Colonic mucosa (tissue), 4 donors: ENCODE measurements at regions of chr6 and their contacts with region 1.

Region 1: GRCh38 chr6:36414481-36414880 is 27.0 kb upstream of the ETV7 start:
- DNase-seq: no peak
- H3K4me3 ChIP-seq: no peak overlapping the region
- H3K27ac ChIP-seq: no peak overlapping the region
- H3K4me1 ChIP-seq: no peaks in the 10 kb centered on the region
- H3K27me3 ChIP-seq: no peaks in the 10 kb centered on the region
- CTCF ChIP-seq: no peak

Region 2: DNA sequence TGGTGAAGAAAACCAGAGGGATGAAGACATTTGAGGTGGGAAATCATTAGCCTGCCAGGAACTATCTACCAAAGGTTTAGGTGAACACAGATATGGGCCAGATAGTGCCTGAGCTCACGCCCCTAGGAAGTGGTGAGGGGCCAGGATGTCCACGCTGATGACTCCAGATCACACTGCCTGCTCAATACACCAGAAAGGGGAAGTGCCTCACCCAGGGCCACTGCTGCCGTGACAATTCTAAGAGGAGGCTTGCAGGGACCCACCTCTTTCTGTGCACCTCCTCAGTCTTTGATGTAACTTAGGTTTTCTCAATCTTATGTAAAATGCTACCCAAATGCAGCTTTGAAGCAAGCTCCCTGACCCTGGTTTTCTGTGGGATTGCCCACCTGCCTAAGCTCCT is 277.7 kb after region 1 on chr6:
- intact Hi-C with region 1: loop called (anchors 10 kb)
- DNase-seq: no peak
- H3K4me3 ChIP-seq: no peak overlapping the region
- H3K27ac ChIP-seq: no peak overlapping the region
- H3K4me1 ChIP-seq: no peaks in the 10 kb centered on the region
- H3K27me3 ChIP-seq: no peaks in the 10 kb centered on the region
- CTCF ChIP-seq: no peak

Region 3: DNA sequence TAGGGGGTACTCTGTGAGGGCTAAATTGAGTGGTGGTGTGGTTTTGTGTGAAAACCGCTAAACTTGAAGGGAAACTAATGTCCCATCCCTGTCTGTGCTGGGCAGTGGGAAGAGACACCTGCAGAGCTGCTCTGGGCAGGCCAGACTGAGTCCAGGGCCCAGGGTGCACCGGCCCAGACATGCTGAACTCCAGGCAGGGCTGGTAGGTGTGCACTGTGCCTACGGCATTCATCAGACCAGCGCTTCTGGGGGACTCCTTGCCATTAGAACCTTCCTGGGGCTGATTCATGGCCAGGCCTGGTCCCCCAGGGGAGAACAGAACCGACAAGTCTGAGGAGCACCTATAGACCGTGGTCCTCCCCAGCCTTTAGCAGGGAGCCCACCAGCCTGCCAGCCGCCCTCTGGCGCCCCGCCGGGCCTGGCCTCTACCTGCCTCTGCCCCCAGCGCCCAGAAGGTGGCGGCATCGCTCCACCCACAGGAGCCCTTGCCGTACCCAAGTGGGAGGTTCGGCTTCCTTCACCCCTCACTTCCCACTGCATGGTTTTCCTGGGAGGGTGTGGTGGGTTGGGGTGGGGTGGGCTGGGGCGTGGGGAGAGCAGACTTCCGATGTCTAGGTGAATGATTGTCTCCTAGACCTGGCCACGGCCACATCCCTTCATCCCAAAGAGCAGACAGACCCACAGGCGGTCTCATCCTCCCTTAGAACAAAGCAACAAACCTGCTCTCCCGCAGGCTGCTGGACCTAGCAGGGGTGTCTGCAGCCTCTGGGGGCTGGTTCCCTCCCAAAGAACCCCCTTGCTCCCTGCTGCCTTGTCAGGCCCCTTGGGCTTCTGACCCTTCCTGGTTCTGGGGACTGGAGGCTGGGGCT is 1069.7 kb after region 1 on chr6:
- intact Hi-C with region 1: no loop called
- DNase-seq: peak; percentile 51
- H3K4me3 ChIP-seq: no peak overlapping the region
- H3K27ac ChIP-seq: no peak overlapping the region
- H3K4me1 ChIP-seq: no peaks in the 10 kb centered on the region
- H3K27me3 ChIP-seq: no peaks in the 10 kb centered on the region
- CTCF ChIP-seq: peak; percentile 67